ENCODE measurements at regions of chr17 and their contacts with region 1.

Region 1: GRCh38 chr17:1186923-1187771 is 7.4 kb upstream of the ABR start:
- DNase-seq: peak; percentile 81
- H3K4me3 Mint-ChIP-seq: no peak overlapping the region
- H3K27ac Mint-ChIP-seq: no peak overlapping the region
- H3K4me1 Mint-ChIP-seq: peaks cover 7% of the 10 kb centered on the region
- H3K27me3 Mint-ChIP-seq: peaks cover 2% of the 10 kb centered on the region

Region 2: DNA sequence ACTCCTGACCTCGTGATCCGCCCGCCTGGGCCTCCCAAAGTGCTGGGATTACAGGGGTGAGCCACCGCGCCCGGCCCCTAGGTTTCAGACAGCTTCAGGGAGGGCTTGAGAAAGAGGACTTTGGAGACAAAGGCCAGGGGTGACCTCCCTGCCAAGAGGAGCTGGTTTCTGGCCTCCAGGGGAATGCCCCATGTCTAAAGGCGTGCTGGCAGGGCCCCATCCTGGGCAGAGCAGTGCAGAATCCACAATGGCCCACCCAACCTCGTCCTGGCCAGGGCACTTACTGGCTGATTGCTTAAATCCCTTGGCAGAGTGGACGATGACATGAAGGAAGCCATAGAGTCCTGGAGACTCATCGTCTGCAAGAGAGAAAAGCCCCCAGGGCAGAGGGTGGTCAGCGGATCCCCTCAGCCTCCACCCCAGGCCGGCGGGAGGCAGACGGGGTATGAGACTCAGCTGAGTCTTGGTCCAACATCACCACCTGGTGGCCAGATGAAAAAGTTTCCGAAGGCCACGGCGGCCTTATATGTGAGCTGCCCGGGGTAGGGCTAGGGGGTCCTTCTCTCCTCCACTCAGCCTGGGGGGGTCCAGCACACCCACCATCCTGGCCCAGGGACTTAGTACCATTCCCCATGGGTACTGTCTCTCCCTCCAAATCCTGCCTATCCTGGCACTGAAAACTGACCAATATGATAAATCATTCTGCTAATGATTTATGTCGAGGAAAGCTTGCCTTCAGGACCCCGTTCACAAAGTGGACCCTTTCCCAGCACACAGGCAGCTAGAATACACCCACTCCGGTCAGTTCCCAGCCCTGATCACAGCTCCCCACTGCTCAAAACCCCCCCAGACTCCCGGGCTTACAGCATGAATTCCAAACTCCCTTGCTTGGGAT is 131.1 kb before region 1 on chr17:
- CTCF ChIA-PET with region 1: interaction called, 39 read pairs
- POLR2A ChIA-PET with region 1: no interaction called
- intact Hi-C with region 1: loop called (anchors 2 kb)
- DNase-seq: peak; percentile 53
- H3K4me3 Mint-ChIP-seq: no peak overlapping the region
- H3K27ac Mint-ChIP-seq: no peak overlapping the region
- H3K4me1 Mint-ChIP-seq: peaks cover 2% of the 10 kb centered on the region
- H3K27me3 Mint-ChIP-seq: no peaks in the 10 kb centered on the region

Region 3: DNA sequence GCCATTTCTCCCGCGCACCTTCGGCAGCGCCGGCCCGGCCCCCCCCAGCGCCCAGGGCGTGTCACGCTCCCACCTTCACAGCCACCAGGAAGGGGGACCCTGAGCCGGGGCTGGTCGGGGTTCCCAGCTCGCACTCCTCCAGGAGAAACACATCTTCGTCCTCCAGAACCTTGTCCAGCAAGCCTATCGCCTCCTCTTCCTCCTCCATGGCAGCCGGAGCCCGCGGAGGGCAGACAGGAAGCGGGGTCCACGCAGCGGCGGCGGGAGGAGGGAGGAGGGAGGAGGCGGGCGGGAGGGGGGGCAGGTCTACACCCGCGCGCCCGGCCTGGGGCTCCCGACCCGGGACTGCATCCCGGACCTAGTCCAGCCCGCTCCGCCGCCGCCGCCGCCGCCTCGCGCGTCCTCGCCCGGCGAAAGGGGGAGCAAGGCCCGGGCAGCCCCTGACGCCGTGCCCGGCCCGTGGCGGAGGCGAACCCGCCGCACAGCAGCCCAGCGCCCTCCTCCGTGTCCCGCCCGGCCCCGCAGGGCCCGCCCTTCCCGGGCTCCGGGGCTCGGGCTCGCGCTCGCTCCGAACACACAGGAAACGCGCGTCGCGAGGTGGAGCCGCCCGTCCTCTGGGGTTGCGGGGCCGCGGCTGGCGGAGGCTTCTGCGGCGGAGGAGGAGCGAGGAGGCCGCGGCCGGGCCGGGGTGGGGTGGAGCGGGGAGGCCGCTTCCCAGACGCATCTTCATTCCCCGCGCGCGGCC is 78.1 kb before region 1 on chr17:
- CTCF ChIA-PET with region 1: interaction called, 4 read pairs
- POLR2A ChIA-PET with region 1: no interaction called
- intact Hi-C with region 1: loop called (anchors 2 kb)
- DNase-seq: peak; percentile 73
- H3K4me3 Mint-ChIP-seq: peak overlapping the region; percentile 88
- H3K27ac Mint-ChIP-seq: peak overlapping the region; percentile 80
- H3K4me1 Mint-ChIP-seq: peaks cover 38% of the 10 kb centered on the region
- H3K27me3 Mint-ChIP-seq: no peaks in the 10 kb centered on the region

Region 4: GRCh38 chr17:1122533-1123392 is 64.4 kb before region 1 on chr17:
- CTCF ChIA-PET with region 1: interaction called, 174 read pairs
- POLR2A ChIA-PET with region 1: no interaction called
- intact Hi-C with region 1: loop called (anchors 2 kb)
- DNase-seq: peak; percentile 90
- H3K4me3 Mint-ChIP-seq: no peak overlapping the region
- H3K27ac Mint-ChIP-seq: no peak overlapping the region
- H3K4me1 Mint-ChIP-seq: peaks cover 6% of the 10 kb centered on the region
- H3K27me3 Mint-ChIP-seq: no peaks in the 10 kb centered on the region

Region 5: DNA sequence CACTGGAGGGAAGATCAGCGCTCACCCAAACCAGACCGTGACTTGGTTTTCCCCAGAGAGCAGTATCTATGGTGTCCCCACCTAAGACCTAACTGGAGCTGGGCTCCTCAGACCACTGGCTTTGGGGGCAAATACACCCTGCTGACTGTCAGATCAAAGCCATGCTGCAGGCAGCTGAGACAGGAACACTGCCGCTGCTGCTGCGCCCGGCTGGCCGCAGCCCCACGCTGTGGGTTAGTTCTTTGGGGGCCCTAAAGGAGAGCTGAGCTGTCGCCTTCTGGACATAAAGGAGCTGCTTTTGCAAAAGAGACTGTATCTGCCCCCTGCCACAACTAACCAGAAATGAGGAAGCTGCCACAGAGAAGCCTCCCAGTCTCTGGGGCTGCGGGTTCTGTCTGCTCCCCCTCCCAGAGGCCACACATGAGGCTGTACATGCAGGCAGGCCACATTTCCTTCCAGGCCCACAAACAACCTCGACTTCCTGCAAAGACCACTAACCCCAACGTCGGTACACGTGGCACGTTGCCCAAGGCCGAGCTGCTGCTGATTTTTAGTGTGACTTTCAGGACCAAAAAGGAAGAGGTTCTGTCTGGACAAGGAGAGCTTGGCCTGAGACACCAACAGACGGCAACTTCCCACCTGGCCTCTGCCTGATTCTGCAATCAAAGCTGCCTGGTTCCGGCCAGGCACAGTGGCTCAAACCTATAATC is 10.8 kb after region 1 on chr17:
- CTCF ChIA-PET with region 1: interaction called, 29 read pairs
- POLR2A ChIA-PET with region 1: no interaction called
- intact Hi-C with region 1: no loop called
- DNase-seq: peak; percentile 67
- H3K4me3 Mint-ChIP-seq: no peak overlapping the region
- H3K27ac Mint-ChIP-seq: peak overlapping the region; percentile 38
- H3K4me1 Mint-ChIP-seq: peaks cover 32% of the 10 kb centered on the region
- H3K27me3 Mint-ChIP-seq: no peaks in the 10 kb centered on the region

Region 6: DNA sequence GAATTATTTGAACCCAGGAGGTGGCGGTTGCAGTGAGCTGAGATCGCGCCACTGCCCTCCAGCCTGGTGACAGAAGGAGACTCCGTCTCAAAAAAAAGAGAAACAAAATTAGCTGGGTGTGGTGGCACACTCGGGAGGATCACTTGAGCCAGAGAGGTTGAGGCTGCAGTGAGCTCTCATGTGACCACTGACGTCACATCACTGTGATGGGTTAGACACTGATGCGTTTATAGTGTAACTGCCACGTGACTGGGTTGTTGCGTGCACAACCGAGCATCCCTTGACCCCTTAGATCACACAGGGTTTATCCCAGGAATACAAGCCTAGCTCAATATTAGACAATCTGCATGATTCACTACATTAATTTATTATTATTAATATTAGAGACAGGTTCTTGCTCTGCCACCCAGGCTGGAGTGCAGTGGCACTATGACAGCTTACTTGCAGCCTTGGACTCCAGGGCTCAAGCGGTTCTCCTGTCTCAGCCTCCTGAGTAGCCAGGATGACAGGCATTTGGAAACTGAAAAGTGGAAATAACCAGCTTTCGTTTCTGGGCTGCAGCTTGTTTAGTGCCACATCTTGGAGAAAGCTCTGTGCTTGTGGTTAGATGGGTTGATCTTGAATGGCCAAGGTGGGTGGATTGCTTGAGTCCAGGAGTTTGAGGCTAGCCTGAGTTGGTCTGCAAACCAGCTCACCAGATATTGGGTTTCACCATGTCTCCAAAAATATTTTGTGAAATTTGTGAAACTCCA is 19.1 kb after region 1 on chr17:
- CTCF ChIA-PET with region 1: interaction called, 23 read pairs
- POLR2A ChIA-PET with region 1: no interaction called
- intact Hi-C with region 1: no loop called
- DNase-seq: no peak
- H3K4me3 Mint-ChIP-seq: no peak overlapping the region
- H3K27ac Mint-ChIP-seq: no peak overlapping the region
- H3K4me1 Mint-ChIP-seq: peaks cover 9% of the 10 kb centered on the region
- H3K27me3 Mint-ChIP-seq: no peaks in the 10 kb centered on the region

Region 7: DNA sequence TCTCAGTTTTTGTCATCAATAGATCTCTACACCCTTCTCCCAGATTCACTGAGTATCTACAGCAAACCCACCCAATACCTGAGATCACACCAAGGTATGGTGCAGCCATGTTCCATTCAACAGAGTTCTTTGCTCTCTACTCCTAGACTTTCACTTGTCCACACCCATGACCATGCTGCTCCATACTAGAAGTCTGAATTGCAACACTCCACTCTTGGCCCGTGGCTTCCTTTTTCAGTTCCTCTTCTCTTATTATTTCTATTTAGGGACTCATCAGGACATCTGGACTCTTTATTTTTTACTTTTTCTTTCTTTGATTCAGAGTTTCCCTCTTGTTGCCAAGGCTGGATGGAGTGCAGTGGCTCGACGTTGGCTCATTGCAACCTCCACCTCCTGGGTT is 175.8 kb after region 1 on chr17:
- CTCF ChIA-PET with region 1: no interaction called
- POLR2A ChIA-PET with region 1: no interaction called
- intact Hi-C with region 1: no loop called
- DNase-seq: no peak
- H3K4me3 Mint-ChIP-seq: peak overlapping the region; percentile 14
- H3K27ac Mint-ChIP-seq: peak overlapping the region; percentile 79
- H3K4me1 Mint-ChIP-seq: peaks cover 69% of the 10 kb centered on the region
- H3K27me3 Mint-ChIP-seq: no peaks in the 10 kb centered on the region